ENCODE measurements at regions of chr7 and their contacts with region 1.

Region 1: DNA sequence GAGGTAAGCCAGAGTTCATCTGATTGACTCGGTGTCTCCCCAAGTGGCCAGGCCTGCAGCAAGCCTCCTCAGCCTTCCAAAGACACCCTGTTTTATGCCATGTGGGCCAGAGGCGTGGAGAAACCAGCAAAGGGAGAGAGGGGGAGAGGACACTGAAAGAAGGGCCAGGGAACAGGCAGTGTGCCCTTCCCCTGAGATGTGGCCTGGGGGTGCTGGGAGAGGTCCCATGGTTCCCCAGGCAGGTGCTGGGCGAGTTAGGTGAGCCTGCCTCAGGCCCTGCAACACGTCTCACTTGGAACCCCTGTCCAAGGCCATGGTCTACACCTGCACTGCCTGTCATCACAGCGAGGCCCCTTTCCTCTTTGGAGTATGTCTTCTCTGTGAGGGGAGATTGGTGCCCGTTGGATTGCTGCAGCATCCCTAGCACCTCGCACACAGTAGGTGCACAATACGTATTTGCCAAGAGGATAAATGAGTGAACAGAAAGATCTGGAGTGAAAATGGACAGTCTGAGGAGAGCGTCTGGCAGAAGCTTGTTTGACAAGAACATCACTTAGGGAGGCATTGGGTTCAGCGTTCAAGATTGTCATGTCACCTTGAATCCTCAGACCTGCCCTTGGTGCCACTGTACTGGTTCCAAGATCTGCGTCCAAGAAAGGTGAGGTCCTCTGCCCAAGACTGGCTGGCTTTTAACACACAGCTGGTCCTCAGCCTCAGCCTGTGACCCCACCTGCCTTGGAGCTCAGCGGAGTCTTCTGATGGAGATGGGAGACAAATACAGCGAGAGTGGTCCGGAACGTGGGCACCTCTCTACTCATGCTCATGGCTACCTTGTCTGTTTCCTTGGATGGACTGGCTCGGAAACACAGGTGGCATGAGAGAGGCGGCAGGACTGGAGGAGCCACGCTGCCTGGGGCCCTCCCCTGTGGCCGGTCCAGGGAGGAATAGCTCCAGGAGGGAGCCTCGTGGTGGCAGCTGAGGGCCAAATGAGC is 39.8 kb upstream of the NUB1 start:
- DNase-seq: no peak
- ATAC-seq: no peak

Region 2: DNA sequence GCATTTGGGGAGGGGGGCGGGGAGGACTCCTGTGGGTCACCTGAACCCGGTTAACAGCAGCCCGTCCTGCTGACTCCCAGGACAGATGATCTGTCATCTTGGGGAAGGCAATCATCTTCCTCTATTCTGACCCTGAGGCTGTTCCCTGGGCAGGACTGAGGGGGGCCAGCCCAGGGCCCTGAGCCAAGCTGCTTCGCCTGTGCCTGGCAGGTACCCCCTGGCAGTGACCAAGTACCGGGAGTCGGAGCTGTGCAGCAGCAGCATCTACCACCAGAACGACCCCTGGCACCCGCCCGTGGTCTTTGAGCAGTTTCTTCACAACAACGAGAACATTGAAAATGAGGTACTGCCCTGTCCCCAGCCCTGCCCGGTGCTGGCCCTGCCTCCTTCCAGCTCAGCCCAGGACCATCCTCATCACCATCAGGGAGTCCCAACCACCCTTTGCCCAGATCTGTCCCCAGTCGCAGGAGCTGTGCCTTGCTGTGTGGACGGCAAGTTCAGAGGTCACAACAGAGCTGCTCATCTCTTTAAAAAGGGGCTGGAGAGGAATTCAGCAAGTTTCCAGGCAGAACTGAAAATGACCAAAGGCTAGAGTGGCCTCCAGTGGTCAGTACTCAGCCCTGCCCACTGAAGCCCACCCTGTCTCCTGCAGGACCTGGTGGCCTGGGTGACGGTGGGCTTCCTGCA is 441.3 kb before region 1 on chr7:
- intact Hi-C with region 1: no loop called
- DNase-seq: no peak
- ATAC-seq: no peak

Region 3: GRCh38 chr7:151123822-151124464 is 177.8 kb before region 1 on chr7:
- intact Hi-C with region 1: loop called (anchors 2 kb)
- DNase-seq: peak; percentile 88
- ATAC-seq: peak; percentile 78

Region 4: DNA sequence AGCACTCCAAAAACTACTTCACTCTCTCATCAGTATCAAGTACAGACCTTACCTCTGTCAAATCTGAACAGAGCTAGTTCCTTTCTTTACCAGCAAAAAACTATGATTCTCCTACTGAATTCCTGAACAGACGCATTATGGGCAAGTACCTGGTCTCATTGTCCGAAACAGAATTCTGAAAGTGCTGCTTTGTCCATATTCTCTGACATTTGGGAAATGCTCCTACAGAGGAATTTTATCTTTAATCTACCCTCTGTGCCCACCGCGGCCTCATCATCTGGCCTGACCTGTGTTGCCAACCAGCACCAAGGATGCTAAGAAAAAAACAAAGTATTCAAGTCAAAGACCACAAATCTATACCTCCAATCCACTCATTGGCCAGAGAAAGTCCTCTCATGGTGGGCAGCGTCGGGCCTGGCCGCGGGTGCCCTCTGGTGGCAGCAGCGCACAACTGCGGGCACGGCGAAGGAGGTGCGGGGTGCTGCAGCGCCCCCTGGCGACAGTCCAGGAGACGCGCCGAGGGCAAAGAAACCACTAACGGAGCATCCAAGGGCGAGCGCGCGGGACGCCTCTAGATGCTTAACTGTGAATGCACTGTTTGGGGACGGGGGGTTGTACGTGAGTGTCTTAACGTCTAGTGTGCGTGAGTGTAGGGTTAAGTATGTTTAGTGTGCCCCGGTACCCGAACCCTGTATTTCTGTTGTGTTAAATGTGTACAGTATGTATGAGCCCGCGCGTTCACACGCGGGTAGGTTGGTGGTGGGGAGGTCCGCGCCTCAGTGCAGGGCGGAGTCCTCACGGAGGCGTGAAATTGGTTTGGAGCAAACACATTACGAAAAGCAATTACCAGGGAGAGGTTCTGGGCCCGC is 129.3 kb before region 1 on chr7:
- intact Hi-C with region 1: loop called (anchors 2 kb)
- DNase-seq: peak; percentile 94
- ATAC-seq: peak; percentile 68

Region 5: GRCh38 chr7:151218170-151218569 is 83.6 kb before region 1 on chr7:
- intact Hi-C with region 1: no loop called
- DNase-seq: no peak
- ATAC-seq: no peak

Region 6: GRCh38 chr7:151232091-151232916 is 69.5 kb before region 1 on chr7 and contains the start of gene CHPF2:
- intact Hi-C with region 1: loop called (anchors 2 kb)
- DNase-seq: peak; percentile 98
- ATAC-seq: peak; percentile 95
- total RNA-seq, gene CHPF2: 11.6 TPM

Region 7: GRCh38 chr7:151244196-151244840 is 57.4 kb before region 1 on chr7:
- intact Hi-C with region 1: loop called (anchors 2 kb)
- DNase-seq: peak; percentile 65
- ATAC-seq: no peak